Activated naive CD4-positive, alpha-beta T cell treated with anti-CD3 and anti-CD28 coated beads, Interleukin-2, amount 10 ng/mL, durations not matched to agents 7 days and 5 days (primary cell): ENCODE measurements at regions of chr6 and their contacts with region 1.

Region 1: DNA sequence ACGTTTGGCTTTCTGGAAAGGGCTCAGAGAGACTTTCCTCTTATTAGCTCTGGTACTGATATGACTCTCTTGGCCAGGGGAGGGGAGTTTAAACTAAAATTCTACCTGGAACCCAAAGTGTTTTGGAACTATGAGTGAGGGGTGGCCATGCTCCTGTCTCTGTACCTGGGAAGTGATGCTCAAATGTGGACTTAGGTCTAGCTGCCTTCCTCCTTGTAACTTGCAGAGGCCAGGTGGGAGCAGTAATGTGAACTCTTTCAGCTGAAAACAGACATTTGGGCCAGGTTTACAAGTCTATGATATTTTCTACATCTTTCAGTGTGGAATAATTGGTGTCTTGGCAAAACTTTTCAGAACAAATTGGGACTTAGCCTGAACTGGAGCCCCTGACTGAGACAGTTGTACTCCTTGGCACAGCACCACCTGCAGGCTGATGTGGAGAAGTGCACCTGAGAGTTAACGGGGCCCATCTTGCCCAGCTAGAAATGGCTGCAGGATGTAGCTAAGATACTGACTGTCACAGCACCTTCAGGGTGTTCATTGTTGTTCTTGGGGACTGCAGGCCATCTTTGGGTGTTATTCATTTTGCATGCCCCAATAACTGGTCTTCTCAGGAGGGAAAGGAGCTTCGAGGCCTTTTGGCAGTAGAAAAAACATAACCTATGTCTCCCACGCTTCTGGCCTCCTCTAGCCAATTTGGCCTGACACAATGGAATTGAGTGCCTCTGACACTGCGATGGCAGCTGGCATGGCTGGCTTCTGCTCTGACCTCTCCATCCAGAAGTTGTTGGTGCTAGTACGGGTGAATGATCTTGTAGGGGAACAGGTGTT is 37.1 kb downstream of the CD109 start:
- DNase-seq: peak; percentile 79
- H3K4me3 Mint-ChIP-seq: no peak overlapping the region
- H3K27ac Mint-ChIP-seq: no peak overlapping the region
- H3K4me1 Mint-ChIP-seq: peaks cover 7% of the 10 kb centered on the region
- H3K27me3 Mint-ChIP-seq: no peaks in the 10 kb centered on the region

Region 2: DNA sequence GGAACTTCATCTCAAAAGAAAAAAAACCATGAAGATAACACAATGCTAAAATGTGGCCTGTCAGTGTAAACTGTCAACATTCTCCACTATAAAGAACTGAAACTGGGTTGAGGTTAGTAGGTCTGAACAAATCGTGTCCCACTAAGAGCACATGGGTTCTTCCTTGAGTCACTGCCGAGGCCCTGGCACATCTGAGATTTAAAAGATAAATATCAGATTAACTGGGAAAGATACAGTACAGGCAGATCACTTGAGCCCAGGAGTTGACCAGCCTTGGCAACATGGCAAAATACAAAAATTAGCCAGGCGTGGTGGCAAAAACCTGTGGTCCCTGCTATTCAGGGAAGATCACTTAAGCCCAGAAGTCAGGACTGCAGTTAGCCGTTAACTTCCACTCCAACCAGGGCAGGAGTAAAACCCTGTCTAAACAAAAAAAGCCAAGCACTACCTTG is 217.8 kb before region 1 on chr6:
- CTCF ChIA-PET with region 1: interaction called, 11 read pairs
- DNase-seq: no peak
- H3K4me3 Mint-ChIP-seq: no peak overlapping the region
- H3K27ac Mint-ChIP-seq: peak overlapping the region; percentile 86
- H3K4me1 Mint-ChIP-seq: peaks cover 49% of the 10 kb centered on the region
- H3K27me3 Mint-ChIP-seq: peaks cover 4% of the 10 kb centered on the region

Region 3: GRCh38 chr6:73675466-73676098 is 57.5 kb before region 1 on chr6:
- CTCF ChIA-PET with region 1: interaction called, 126 read pairs
- DNase-seq: peak; percentile 79
- H3K4me3 Mint-ChIP-seq: no peak overlapping the region
- H3K27ac Mint-ChIP-seq: no peak overlapping the region
- H3K4me1 Mint-ChIP-seq: no peaks in the 10 kb centered on the region
- H3K27me3 Mint-ChIP-seq: peaks cover 49% of the 10 kb centered on the region

Region 4: GRCh38 chr6:73713410-73714147 is 19.5 kb before region 1 on chr6:
- CTCF ChIA-PET with region 1: interaction called, 21 read pairs
- DNase-seq: peak; percentile 31
- H3K4me3 Mint-ChIP-seq: no peak overlapping the region
- H3K27ac Mint-ChIP-seq: no peak overlapping the region
- H3K4me1 Mint-ChIP-seq: peaks cover 21% of the 10 kb centered on the region
- H3K27me3 Mint-ChIP-seq: no peaks in the 10 kb centered on the region

Region 5: GRCh38 chr6:73747289-73747688 is 14.2 kb after region 1 on chr6:
- CTCF ChIA-PET with region 1: interaction called, 14 read pairs
- DNase-seq: no peak
- H3K4me3 Mint-ChIP-seq: no peak overlapping the region
- H3K27ac Mint-ChIP-seq: no peak overlapping the region
- H3K4me1 Mint-ChIP-seq: peaks cover 2% of the 10 kb centered on the region
- H3K27me3 Mint-ChIP-seq: no peaks in the 10 kb centered on the region

Region 6: GRCh38 chr6:73888050-73888449 is 155.0 kb after region 1 on chr6:
- CTCF ChIA-PET with region 1: no interaction called
- DNase-seq: no peak
- H3K4me3 Mint-ChIP-seq: no peak overlapping the region
- H3K27ac Mint-ChIP-seq: no peak overlapping the region
- H3K4me1 Mint-ChIP-seq: no peaks in the 10 kb centered on the region
- H3K27me3 Mint-ChIP-seq: no peaks in the 10 kb centered on the region